ENCODE measurements at regions of chr3 and their contacts with region 1.

Region 1: DNA sequence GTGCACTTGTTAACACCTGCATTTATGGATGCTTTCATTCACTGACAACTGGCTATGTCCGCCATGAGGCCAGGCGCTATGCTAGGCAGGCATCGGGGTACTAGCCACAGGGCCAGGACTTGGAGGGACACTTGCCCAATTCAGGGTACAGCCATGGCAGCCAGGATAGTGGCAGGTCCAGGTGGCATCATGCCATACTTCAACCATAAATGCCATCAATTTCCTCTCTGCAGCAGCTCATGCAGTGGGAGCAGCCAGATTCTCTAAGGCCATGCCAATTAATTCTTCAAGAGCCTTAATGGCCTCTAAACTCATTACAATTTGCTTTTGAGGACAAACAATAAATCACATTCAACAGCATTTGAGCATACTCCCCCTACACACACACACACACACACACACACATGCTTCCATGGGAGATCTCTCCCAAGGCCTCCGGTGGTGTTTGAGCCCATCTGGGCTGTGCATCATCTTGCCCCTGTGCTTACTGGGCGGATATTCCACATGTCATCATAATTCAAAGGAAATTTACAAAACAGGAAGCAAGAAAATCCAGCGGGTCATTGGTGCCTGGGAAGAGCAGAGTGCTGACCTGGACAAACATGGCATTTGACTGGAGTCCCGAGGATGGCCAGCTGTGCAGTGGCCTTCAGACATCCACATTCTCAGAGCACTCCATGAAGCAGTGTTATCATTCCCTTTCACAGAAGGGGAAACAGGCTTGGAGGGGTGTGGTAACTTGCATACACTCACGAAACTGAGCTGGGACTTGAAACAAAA is 109.1 kb downstream of the IQSEC1 start:
- DNase-seq: no peak
- ATAC-seq: no peak
- H3K4me3 Mint-ChIP-seq: peak overlapping the region; percentile 29
- H3K27ac Mint-ChIP-seq: peak overlapping the region; percentile 84
- H3K4me1 Mint-ChIP-seq: peaks cover 76% of the 10 kb centered on the region
- H3K27me3 Mint-ChIP-seq: no peaks in the 10 kb centered on the region

Region 2: GRCh38 chr3:12948891-12949711 is 15.0 kb before region 1 on chr3:
- CTCF ChIA-PET with region 1: interaction called, 16 read pairs
- DNase-seq: peak; percentile 84
- ATAC-seq: peak; percentile 90
- H3K4me3 Mint-ChIP-seq: no peak overlapping the region
- H3K27ac Mint-ChIP-seq: peak overlapping the region; percentile 52
- H3K4me1 Mint-ChIP-seq: peaks cover 55% of the 10 kb centered on the region
- H3K27me3 Mint-ChIP-seq: no peaks in the 10 kb centered on the region

Region 3: DNA sequence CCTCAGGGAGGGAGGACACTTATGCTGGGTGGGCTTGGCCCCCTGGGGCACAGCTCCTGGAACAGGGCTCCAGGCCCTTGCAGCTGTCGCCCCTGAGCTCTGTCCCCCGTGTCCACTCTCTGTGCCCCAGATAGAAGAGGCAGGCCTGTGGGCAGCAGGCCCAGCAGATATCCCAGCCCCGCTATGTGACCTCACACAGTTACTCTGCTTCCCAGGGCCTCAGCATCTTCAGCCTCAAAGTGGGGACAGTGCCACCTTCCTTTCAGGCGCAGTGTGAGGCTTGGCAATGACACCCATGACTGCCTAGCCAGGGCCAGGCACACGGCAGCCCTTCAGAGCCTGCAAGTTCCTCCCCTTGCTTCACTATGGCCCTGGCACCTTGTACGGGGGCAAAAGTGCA is 10.7 kb after region 1 on chr3:
- CTCF ChIA-PET with region 1: no interaction called
- DNase-seq: no peak
- ATAC-seq: no peak
- H3K4me3 Mint-ChIP-seq: no peak overlapping the region
- H3K27ac Mint-ChIP-seq: no peak overlapping the region
- H3K4me1 Mint-ChIP-seq: peaks cover 43% of the 10 kb centered on the region
- H3K27me3 Mint-ChIP-seq: no peaks in the 10 kb centered on the region